ENCODE measurements at regions of chr22 and their contacts with region 1.

Region 1: GRCh38 chr22:23539135-23539838 is 40.8 kb downstream of the IGLL1 start:
- DNase-seq: peak; percentile 69 to 91 (median 78)
- ATAC-seq: peak; percentile 97 to 100 (median 98)
- H3K4me3 ChIP-seq: peak overlapping the region in 2 of 4 donors; percentile 12 to 25
- H3K27ac ChIP-seq: no peak overlapping the region
- H3K4me1 ChIP-seq: no peaks in the 10 kb centered on the region
- H3K27me3 ChIP-seq: no peaks in the 10 kb centered on the region
- CTCF ChIP-seq: peak; percentile 62 to 83 (median 72)

Region 2: GRCh38 chr22:23402275-23403151 is 136.8 kb before region 1 on chr22:
- intact Hi-C with region 1: loop called in 1 of 3 experiments (anchors 10 kb)
- DNase-seq: peak; percentile 74 to 93 (median 85)
- ATAC-seq: peak; percentile 90 to 94 (median 92)
- H3K4me3 ChIP-seq: peak overlapping the region in 3 of 4 donors; percentile 12 to 57 (median 37)
- H3K27ac ChIP-seq: peak overlapping the region in 2 of 4 donors; percentile 17 to 22
- H3K4me1 ChIP-seq: no peaks in the 10 kb centered on the region
- H3K27me3 ChIP-seq: no peaks in the 10 kb centered on the region
- CTCF ChIP-seq: peak; percentile 34 to 54 (median 48)

Region 3: DNA sequence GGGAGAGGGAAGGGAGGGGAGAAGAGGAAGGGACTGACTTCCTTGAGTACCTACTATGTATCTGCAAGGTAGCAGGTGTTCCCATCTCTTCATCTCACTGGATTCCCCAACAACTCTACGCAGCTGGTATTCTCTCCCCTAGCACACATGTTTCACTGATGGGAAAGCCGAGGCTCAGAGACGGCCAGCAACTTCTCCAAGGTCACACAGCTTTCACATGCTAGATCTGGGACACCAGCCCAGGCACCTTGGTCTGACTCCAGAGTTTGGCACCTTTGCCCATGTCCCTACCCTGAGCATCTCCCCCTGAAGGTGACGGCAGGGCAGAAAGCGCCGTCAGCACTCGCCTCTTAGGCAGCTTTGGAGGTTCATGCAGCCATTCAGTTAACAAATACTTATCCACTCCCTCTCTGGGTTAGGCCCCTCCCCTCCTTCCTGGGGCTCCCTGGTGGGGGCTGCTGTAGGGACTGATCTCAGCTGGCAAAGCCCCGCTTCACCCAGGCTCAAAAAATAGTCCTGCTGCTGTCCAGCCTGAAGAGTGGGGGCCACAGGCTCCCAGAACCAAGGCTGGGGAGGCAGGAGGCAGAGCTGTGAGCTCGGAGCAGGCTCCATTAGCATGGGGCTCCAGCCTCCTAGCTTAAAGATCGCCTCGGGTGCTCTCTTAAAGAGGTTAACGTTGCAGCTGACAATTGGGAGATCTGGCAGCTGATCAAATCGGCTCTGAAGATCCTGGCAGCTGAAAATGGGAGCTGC is 38.6 kb before region 1 on chr22:
- intact Hi-C with region 1: no loop called
- DNase-seq: peak in 1 of 6 donors; percentile 36
- ATAC-seq: no peak
- H3K4me3 ChIP-seq: no peak overlapping the region
- H3K27ac ChIP-seq: no peak overlapping the region
- H3K4me1 ChIP-seq: no peaks in the 10 kb centered on the region
- H3K27me3 ChIP-seq: no peaks in the 10 kb centered on the region
- CTCF ChIP-seq: no peak

Region 4: DNA sequence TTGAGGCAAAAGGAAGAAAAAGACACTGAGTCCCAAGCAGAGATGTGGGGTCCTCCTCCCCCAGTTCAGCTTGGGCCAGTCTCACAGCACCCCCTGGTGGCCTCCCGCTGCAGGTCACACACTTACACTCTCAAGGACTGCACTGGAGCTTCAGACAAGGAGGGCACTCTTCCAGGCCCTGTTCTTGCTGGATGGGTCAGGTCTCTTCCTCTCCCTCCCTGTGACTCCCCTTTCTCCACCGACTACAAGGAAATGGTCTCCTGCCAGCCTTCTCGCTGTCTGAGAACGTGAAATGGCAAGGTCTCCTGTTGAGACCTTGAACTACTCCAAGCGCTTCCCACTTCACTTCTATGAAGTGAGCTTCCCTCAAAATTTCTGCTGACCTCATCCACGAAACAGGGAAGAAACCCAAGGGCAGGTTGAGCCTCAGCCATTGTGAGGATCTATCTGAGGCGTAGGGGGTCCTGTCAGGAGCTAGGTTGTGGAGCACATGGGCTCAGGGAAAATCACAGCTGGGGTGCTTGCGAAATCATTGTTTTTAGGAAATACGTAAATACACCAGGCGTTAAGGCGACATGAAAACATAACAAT is 52.0 kb after region 1 on chr22:
- intact Hi-C with region 1: loop called in 1 of 3 experiments (anchors 10 kb)
- DNase-seq: peak in 5 of 6 donors; percentile 64 to 85 (median 70)
- ATAC-seq: peak; percentile 77 to 96 (median 90)
- H3K4me3 ChIP-seq: no peak overlapping the region
- H3K27ac ChIP-seq: peak overlapping the region; percentile 35 to 64 (median 38)
- H3K4me1 ChIP-seq: peaks cover 0 to 9% (median 7%) of the 10 kb centered on the region in 3 donors
- H3K27me3 ChIP-seq: no peaks in the 10 kb centered on the region
- CTCF ChIP-seq: peak; percentile 76 to 85 (median 80)